Colonic mucosa (tissue), 4 donors: ENCODE measurements at regions of chr5 and their contacts with region 1.

Region 1: DNA sequence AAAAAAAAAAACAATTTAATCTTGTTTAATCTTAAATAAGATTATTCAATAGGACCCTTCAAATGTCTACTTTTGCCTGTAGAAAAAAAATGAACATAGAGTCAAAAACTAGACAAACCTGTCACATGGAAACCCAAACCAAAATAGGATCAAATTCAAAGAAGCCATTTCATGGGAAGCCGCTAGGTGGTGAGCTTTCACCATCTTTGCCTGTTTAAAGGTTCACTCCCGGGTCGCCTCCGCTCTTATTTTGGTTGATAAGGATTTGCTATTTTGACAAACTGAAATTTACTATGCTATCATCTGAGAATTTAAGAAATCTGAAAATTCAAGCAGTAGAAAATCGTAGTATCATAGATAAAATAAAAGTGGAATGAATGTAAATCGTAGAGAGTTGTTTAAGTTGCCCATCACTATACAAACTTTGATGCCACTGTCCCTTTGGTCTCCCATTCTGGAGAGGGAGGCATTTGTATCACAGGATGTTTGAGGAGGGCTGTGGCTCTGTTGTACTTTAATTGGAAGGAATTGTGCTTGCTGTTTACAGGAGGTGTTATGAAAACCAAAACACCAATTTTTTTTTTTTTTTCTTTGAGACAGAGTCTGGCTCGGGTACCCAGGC is 43.5 kb upstream of the DNAH5 start:
- DNase-seq: peak; percentile 42
- H3K4me3 ChIP-seq: no peak overlapping the region
- H3K27ac ChIP-seq: no peak overlapping the region
- H3K4me1 ChIP-seq: no peaks in the 10 kb centered on the region
- H3K27me3 ChIP-seq: no peaks in the 10 kb centered on the region
- CTCF ChIP-seq: peak; percentile 85

Region 2: GRCh38 chr5:13946115-13946514 is 41.8 kb before region 1 on chr5:
- intact Hi-C with region 1: no loop called
- DNase-seq: no peak
- H3K4me3 ChIP-seq: no peak overlapping the region
- H3K27ac ChIP-seq: no peak overlapping the region
- H3K4me1 ChIP-seq: no peaks in the 10 kb centered on the region
- H3K27me3 ChIP-seq: no peaks in the 10 kb centered on the region
- CTCF ChIP-seq: no peak

Region 3: DNA sequence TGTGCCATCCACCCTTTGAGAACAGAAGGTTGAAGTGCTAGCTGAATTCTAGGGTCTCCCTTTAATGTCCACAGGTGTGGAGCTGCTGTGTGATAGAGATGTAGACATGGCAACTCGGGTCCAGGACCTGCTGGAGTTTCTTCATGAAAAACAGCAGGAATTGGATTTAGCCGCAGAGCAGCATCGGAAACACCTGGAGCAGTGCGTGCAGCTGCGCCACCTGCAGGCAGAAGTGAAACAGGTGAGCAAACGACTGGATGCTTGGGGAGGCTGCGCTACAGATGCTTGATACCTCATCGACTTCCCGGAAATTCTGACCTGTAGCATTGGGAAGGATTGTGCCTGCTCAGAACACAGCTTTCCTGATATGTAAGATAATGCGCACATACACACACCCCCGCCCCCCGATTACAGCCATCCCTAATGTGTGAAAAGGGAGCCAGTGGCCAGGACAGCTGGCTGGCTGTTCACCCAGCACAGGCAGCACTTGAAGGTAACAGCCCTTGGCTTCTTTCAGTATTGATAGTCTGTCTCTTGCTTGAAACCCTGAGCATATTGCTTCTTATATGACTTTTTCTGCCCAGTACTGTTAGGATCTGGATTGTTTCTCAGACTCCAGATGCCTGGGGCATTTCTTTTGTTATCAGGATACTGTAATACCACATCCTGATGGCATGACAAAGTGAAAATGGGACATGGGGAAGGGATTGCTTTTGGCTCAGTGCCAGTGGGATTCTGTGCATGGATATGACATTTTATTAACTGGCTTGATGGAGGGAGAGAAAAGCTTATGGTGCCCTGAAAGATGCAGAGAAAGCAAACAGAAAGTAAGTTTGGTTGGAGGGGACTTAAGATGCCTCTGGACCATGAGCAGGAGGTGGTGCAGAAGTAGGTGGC is 376.9 kb after region 1 on chr5:
- intact Hi-C with region 1: loop called (anchors 10 kb)
- DNase-seq: peak; percentile 36
- H3K4me3 ChIP-seq: no peak overlapping the region
- H3K27ac ChIP-seq: no peak overlapping the region
- H3K4me1 ChIP-seq: no peaks in the 10 kb centered on the region
- H3K27me3 ChIP-seq: no peaks in the 10 kb centered on the region
- CTCF ChIP-seq: peak; percentile 21